CD4-positive, alpha-beta T cell (primary cell): ENCODE measurements at regions of chr19 and their contacts with region 1.

Region 1: GRCh38 chr19:46529622-46530462 is 34.2 kb upstream of the PNMA8B start:
- DNase-seq: peak; percentile 58 to 89 (median 75)
- ATAC-seq: peak; percentile 79
- H3K4me3 ChIP-seq: no peak overlapping the region
- H3K4me3 Mint-ChIP-seq: no peak overlapping the region
- H3K27ac ChIP-seq: no peak overlapping the region
- H3K27ac Mint-ChIP-seq: peak overlapping the region; percentile 8
- H3K4me1 ChIP-seq: peaks cover 16% of the 10 kb centered on the region
- H3K4me1 Mint-ChIP-seq: peaks cover 20% of the 10 kb centered on the region
- H3K27me3 ChIP-seq: no peaks in the 10 kb centered on the region
- H3K27me3 Mint-ChIP-seq: no peaks in the 10 kb centered on the region
- CTCF ChIP-seq: peak; percentile 98

Region 2: GRCh38 chr19:46513461-46514236 is 16.2 kb before region 1 on chr19:
- CTCF ChIA-PET with region 1: interaction called, 15 read pairs
- POLR2A ChIA-PET with region 1: interaction called, 7 read pairs
- intact Hi-C with region 1: loop called in 1 of 2 experiments (anchors 1 kb)
- DNase-seq: peak; percentile 60 to 91 (median 80)
- ATAC-seq: peak; percentile 66
- H3K4me3 ChIP-seq: no peak overlapping the region
- H3K4me3 Mint-ChIP-seq: no peak overlapping the region
- H3K27ac ChIP-seq: no peak overlapping the region
- H3K27ac Mint-ChIP-seq: no peak overlapping the region
- H3K4me1 ChIP-seq: peaks cover 22% of the 10 kb centered on the region
- H3K4me1 Mint-ChIP-seq: peaks cover 16% of the 10 kb centered on the region
- H3K27me3 ChIP-seq: peaks cover 0 to 10% of the 10 kb centered on the region in 2 experiments
- H3K27me3 Mint-ChIP-seq: peaks cover 28% of the 10 kb centered on the region
- CTCF ChIP-seq: peak; percentile 64

Region 3: DNA sequence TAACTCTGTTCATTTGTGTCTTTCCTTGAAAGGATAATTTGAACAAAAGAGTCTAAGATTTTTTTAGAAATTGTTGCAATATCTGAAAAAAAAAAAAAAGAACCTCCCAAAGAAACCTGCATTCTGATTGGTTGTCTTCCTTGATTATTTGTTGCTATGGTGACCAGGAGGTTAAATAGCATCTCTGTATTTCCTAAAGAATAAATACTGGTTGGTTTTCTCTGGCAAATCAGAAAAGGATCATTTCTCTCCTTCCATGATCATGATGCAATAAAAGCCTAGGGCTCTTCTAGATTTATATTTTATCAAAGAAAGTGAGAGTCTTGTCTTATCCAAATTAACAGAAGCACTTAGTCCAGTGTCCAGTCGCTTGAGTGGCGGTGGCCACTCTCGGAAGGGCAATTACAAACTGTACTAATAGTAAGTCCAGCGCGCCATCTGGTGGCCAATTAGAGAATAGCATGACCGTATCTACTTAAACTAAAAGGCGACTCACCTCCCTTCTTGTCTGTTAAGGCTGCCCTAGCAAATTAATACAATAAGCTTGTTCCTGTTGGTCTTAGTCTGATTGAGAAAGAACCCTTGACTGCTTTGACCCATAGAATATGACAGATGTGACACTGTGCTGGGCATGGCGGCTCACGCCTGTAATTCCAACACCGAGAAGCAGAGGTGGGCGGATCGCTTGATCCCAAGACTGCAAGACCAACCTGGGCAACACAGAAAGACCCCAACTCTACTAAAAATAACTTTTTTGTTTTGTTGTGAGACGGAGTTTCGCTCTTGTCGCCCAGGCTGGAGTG is 12.8 kb after region 1 on chr19:
- CTCF ChIA-PET with region 1: interaction called, 19 read pairs
- POLR2A ChIA-PET with region 1: interaction called, 5 read pairs
- intact Hi-C with region 1: loop called (anchors 1 to 2 kb)
- DNase-seq: peak; percentile 65 to 90 (median 76)
- ATAC-seq: peak; percentile 68
- H3K4me3 ChIP-seq: no peak overlapping the region
- H3K4me3 Mint-ChIP-seq: no peak overlapping the region
- H3K27ac ChIP-seq: no peak overlapping the region
- H3K27ac Mint-ChIP-seq: no peak overlapping the region
- H3K4me1 ChIP-seq: peaks cover 13% of the 10 kb centered on the region
- H3K4me1 Mint-ChIP-seq: peaks cover 7% of the 10 kb centered on the region
- H3K27me3 ChIP-seq: no peaks in the 10 kb centered on the region
- H3K27me3 Mint-ChIP-seq: peaks cover 3% of the 10 kb centered on the region
- CTCF ChIP-seq: peak; percentile 97

Region 4: GRCh38 chr19:46614114-46614722 is 84.4 kb after region 1 on chr19:
- CTCF ChIA-PET with region 1: interaction called, 4 read pairs
- POLR2A ChIA-PET with region 1: interaction called, 3 read pairs
- intact Hi-C with region 1: loop called in 1 of 2 experiments (anchors 5 kb)
- DNase-seq: peak; percentile 71 to 89 (median 77)
- ATAC-seq: peak; percentile 58
- H3K4me3 ChIP-seq: no peak overlapping the region
- H3K4me3 Mint-ChIP-seq: peak overlapping the region; percentile 56
- H3K27ac ChIP-seq: peak overlapping the region in 1 of 2 donors; percentile 41
- H3K27ac Mint-ChIP-seq: peak overlapping the region; percentile 93
- H3K4me1 ChIP-seq: peaks cover 90% of the 10 kb centered on the region
- H3K4me1 Mint-ChIP-seq: peaks cover 74% of the 10 kb centered on the region
- H3K27me3 ChIP-seq: no peaks in the 10 kb centered on the region
- H3K27me3 Mint-ChIP-seq: no peaks in the 10 kb centered on the region
- CTCF ChIP-seq: peak; percentile 90

Region 5: DNA sequence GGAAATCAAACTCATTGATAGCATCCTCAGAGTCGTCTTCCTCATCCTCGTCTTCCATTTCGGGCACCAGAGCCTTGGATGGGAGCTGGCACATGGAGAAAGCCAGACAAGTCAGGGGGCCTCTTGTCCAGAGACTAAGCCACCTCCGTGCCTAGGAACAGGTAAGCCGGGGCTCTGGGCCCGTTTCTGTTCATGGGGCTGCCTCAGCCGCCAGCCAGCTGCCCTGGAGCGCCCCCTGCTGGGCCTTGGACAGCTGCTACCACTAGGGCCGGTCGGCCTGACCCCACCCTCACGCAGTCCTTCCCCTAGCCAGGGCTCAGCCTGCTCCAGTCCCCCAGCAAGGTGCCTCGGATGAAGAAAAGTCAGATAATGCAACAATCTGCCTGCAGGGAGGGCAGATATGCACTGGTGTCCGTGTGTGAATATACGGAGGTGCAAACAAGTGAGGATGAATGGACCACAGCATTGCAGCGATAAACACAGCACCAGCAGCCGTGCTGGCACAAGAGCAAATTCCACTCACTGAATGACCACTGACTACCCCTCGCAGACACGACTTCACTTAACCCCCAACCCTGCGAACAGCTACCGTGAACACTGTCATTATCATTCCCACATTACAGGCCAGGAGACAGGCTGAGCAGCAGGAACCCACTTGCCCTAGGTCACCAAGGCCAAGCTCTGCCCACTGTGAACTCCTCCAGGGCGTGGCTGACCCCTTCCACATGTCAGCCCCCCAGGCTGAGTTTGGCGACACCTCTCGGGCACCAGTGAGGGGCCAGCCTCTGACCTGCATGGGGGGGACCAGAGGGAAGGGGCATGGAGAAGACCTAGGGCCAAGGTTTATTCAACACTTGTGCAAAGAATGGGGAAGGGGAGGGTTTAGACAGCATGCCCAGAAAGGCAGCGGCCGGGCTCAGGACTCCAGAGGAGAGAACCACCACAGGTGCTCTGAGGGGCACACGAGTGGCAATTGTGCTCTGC is 199.1 kb after region 1 on chr19:
- CTCF ChIA-PET with region 1: interaction called, 6 read pairs
- POLR2A ChIA-PET with region 1: no interaction called
- intact Hi-C with region 1: loop called (anchors 1 to 2 kb)
- DNase-seq: peak; percentile 69 to 90 (median 82)
- ATAC-seq: peak; percentile 89
- H3K4me3 ChIP-seq: no peak overlapping the region
- H3K4me3 Mint-ChIP-seq: no peak overlapping the region
- H3K27ac ChIP-seq: no peak overlapping the region
- H3K27ac Mint-ChIP-seq: no peak overlapping the region
- H3K4me1 ChIP-seq: peaks cover 11% of the 10 kb centered on the region
- H3K4me1 Mint-ChIP-seq: peaks cover 8% of the 10 kb centered on the region
- H3K27me3 ChIP-seq: no peaks in the 10 kb centered on the region
- H3K27me3 Mint-ChIP-seq: no peaks in the 10 kb centered on the region
- CTCF ChIP-seq: peak; percentile 89

Region 6: DNA sequence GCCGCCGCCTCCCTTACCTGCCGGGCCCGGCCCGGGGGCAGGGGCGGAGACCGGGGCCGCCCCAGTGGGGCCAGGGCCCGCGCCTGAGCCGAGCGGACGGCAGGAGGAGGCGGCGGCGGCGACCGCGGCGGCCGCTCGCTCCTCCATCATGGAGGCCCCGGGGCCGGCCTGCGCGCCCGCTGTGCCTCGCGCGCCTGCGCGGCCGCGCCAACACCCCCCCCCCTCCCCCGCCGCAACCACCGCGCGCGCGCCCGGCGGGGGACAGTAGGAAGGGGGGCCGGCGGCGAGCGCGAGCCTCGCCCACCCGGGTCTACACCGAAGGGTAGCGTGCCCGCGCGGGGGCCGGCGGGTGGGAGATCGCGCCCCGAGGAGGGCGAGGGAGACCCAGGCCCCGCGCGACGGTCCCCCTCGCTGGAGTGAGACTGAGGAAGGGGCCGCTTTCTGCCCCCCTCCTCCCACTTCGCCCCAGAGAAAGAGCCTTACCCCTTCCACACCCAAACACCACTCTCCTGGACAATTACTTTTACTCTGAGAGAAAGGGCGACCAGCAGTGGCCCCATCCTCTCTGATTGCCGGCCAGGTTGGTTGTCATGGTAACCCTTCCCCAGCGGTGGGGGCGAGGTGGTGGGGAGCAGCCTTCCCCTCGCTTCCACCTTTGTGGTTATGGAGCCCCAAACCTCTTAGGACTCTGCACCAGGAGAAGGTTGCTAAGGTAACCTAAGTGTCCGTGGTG is 216.6 kb after region 1 on chr19 and contains the start of gene STRN4:
- CTCF ChIA-PET with region 1: interaction called, 3 read pairs
- POLR2A ChIA-PET with region 1: no interaction called
- intact Hi-C with region 1: loop called (anchors 1 to 2 kb)
- DNase-seq: peak; percentile 30 to 87 (median 54)
- ATAC-seq: peak; percentile 69
- H3K4me3 ChIP-seq: peak within 1 kb of the TSS; percentile 78
- H3K4me3 Mint-ChIP-seq: peak within 1 kb of the TSS; percentile 94
- H3K27ac ChIP-seq: peak within 1 kb of the TSS; percentile 9 to 29
- H3K27ac Mint-ChIP-seq: peak within 1 kb of the TSS; percentile 87
- H3K4me1 ChIP-seq: peaks cover 42% of the 10 kb centered on the region
- H3K4me1 Mint-ChIP-seq: peaks cover 55% of the 10 kb centered on the region
- H3K27me3 ChIP-seq: no peaks in the 10 kb centered on the region
- H3K27me3 Mint-ChIP-seq: no peaks in the 10 kb centered on the region
- CTCF ChIP-seq: no peak
- total RNA-seq, gene STRN4: 90.0 to 94.0 TPM